WTC11 (cell line): ENCODE measurements at regions of chr21 and their contacts with region 1.

Region 1: DNA sequence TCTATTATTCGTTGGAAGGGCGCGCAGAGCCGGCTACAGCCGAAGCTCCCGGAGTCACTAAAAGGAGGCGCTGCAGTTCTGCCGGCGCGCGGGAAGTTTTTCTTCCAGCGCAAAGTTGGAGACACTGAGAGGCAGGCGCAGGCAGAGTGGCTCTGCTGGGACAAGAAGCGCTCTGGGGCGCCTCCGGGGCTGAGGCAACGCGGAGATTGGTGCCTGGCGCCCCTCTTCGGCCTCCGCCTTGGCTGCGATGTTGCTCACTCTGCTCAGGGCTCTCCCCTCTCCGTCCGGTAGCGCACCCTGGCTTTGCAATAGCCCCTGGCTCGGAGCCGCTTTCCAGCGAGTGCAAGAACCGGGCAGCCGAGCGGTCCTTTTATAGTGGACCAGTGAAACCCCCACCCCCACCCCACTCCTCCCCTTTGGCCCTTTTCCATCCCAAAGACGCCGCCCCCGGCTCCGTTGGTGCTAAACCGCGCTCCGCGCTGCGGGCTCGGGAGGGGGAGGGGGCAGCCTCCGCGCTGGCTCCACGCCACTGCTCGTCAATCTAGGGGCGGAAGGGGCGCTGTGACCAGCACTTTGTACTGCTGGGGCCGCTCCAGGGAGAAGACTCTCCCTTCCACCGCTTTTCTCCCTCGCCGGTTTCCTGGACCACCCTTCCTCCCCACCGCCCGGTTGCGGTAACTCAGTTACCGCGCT is at the start of gene ADAMTS1:
- DNase-seq: peak; percentile 88
- ATAC-seq: peak; percentile 69
- H3K4me3 Mint-ChIP-seq: peak within 1 kb of the TSS; percentile 89
- H3K27ac Mint-ChIP-seq: peak within 1 kb of the TSS; percentile 90
- H3K4me1 Mint-ChIP-seq: peaks cover 33% of the 10 kb centered on the region
- H3K27me3 Mint-ChIP-seq: peaks cover 7% of the 10 kb centered on the region
- CTCF ChIP-seq: no peak
- total RNA-seq, gene ADAMTS1: 16.9 to 35.6 TPM (median 20.4 TPM) in 3 replicates

Region 2: GRCh38 chr21:26967062-26967913 is 122.1 kb after region 1 on chr21 and contains the start of gene ADAMTS5:
- CTCF ChIA-PET with region 1: interaction called, 12 read pairs
- POLR2A ChIA-PET with region 1: interaction called, 6 read pairs
- DNase-seq: peak; percentile 58
- ATAC-seq: peak; percentile 13
- H3K4me3 Mint-ChIP-seq: peak within 1 kb of the TSS; percentile 87
- H3K27ac Mint-ChIP-seq: no peak within 1 kb of the TSS
- H3K4me1 Mint-ChIP-seq: peaks cover 41% of the 10 kb centered on the region
- H3K27me3 Mint-ChIP-seq: peaks cover 49% of the 10 kb centered on the region
- CTCF ChIP-seq: no peak
- total RNA-seq, gene ADAMTS5: 0.57 to 1.6 TPM (median 0.64 TPM) in 3 replicates

Region 3: GRCh38 chr21:27108228-27108627 is 263.0 kb after region 1 on chr21:
- CTCF ChIA-PET with region 1: no interaction called
- POLR2A ChIA-PET with region 1: no interaction called
- DNase-seq: no peak
- ATAC-seq: no peak
- H3K4me3 Mint-ChIP-seq: no peak overlapping the region
- H3K27ac Mint-ChIP-seq: no peak overlapping the region
- H3K4me1 Mint-ChIP-seq: peaks cover 26% of the 10 kb centered on the region
- H3K27me3 Mint-ChIP-seq: no peaks in the 10 kb centered on the region
- CTCF ChIP-seq: no peak

Region 4: GRCh38 chr21:27213303-27213702 is 368.1 kb after region 1 on chr21:
- CTCF ChIA-PET with region 1: interaction called, 22 read pairs
- POLR2A ChIA-PET with region 1: no interaction called
- DNase-seq: no peak
- ATAC-seq: peak; percentile 75; the same call in 1 of the 2 replicates
- H3K4me3 Mint-ChIP-seq: no peak overlapping the region
- H3K27ac Mint-ChIP-seq: no peak overlapping the region
- H3K4me1 Mint-ChIP-seq: no peaks in the 10 kb centered on the region
- H3K27me3 Mint-ChIP-seq: no peaks in the 10 kb centered on the region; the same call in 1 of the 2 replicates
- CTCF ChIP-seq: no peak

Region 5: DNA sequence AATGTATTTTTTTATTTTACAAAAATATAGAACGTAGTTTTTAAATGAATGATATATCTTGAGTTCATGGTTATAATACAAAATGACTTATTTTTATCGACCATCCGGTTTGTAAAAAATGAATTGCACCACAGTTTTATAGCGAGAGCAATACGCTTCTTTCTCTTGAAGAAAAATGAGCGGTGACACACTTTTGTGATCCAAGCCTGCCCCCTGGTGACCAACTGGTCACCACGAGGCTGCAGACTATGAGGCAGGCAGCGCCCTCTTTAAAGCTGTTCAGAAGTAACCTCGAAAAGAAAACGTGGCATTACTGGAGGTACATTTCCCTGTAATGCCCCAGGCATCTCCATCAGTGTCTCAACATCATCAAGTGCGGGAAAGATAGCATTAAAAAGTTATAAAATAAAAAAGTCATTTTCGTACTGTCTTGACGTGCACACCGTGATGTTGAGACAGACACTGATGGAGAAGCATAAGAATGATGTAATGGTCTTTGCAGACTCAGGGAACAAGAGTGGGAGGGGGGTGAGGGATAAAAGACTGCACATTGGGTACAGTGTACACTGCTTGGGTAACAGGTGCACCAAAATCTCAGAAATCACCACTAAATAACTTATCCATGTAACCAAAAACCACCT is 855.9 kb after region 1 on chr21:
- CTCF ChIA-PET with region 1: interaction called, 33 read pairs
- POLR2A ChIA-PET with region 1: no interaction called
- DNase-seq: peak; percentile 81
- ATAC-seq: peak; percentile 86
- H3K4me3 Mint-ChIP-seq: no peak overlapping the region
- H3K27ac Mint-ChIP-seq: no peak overlapping the region
- H3K4me1 Mint-ChIP-seq: no peaks in the 10 kb centered on the region
- H3K27me3 Mint-ChIP-seq: no peaks in the 10 kb centered on the region
- CTCF ChIP-seq: peak; percentile 75